ENCODE measurements at regions of chr21 and their contacts with region 1.

Region 1: DNA sequence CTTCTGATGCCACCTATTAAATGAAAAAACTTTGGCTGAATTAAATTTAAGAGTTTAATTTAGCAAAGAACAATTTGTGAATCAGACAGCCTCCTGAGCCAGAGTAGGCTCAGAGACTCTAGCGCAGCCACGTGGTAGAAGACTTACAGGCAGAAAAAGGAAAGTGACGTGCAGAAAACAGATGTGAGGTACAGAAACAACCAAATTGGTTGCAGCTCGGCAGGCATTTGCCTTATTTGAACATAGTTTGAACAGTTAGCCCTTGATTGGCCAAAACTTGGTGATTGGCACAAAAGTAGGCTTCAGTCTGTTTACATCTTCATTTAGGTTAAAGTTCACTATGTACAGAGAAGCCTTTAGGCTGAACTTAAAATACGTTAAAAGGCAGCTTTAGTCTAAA is 22.9 kb downstream of the TCP10L start:
- DNase-seq: peak; percentile 83
- ATAC-seq: peak; percentile 81
- H3K4me3 ChIP-seq: no peak overlapping the region
- H3K27ac ChIP-seq: no peak overlapping the region
- H3K4me1 ChIP-seq: no peaks in the 10 kb centered on the region
- H3K27me3 ChIP-seq: no peaks in the 10 kb centered on the region
- CTCF ChIP-seq: peak; percentile 64
- POLR2A ChIP-seq: no peak
- RAD21 ChIP-seq: peak; percentile 75

Region 2: DNA sequence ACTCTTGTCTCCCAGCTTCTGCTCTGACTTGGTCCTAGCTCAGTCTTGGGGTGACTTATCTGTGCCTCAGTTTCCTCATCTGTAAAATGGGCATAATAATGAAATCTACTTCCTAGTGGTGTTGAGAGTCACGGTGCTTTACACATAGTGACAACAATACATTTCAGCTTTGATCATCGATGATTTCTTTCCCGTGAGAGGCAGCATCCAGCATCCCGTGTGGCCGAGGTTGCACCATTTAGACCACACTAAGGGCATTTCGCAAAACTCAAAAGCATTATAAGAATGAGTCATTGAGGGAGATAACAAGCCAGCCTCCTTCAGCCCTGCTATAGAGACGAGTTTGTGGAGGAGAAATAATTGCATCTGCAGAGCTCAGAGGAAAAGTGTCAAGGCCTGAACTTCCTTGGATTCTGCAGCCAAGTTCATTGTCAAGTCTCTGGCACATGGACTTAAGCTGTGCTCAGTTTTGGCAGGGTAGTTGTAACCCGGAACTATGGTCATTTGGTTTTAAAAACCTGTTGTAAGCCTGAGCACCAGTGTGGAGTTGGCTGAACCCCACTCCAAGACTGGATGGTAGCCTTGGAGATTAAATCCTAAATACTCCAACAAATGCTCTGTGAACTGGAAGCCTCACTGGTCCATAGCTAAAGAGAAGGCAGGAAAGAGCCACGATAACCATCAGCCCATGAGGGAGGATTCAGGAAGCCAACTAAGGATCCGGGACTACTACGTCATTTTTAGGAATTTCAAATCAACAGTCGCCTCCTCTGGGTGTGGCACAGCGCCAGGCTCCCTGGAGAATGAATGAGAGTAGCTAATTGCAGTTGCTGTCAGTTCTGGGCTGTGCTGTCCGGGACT is 41.3 kb before region 1 on chr21:
- CTCF ChIA-PET with region 1: no interaction called
- POLR2A ChIA-PET with region 1: no interaction called
- dilution Hi-C with region 1: no loop called
- in situ Hi-C with region 1: no loop called
- intact Hi-C with region 1: loop called (anchors 5 kb)
- DNase-seq: peak; percentile 97
- ATAC-seq: peak; percentile 71
- H3K4me3 ChIP-seq: no peak overlapping the region
- H3K27ac ChIP-seq: peak overlapping the region; percentile 73
- H3K4me1 ChIP-seq: peaks cover 21% of the 10 kb centered on the region
- H3K27me3 ChIP-seq: no peaks in the 10 kb centered on the region
- CTCF ChIP-seq: no peak
- POLR2A ChIP-seq: peak; percentile 61
- RAD21 ChIP-seq: no peak

Measured in IMR-90 (cell line).